WTC11 (cell line): ENCODE measurements at regions of chr5 and their contacts with region 1.

Region 1: GRCh38 chr5:78127875-78128274 is 166.6 kb downstream of the AP3B1 start:
- DNase-seq: peak; percentile 48
- ATAC-seq: peak; percentile 41; the same call in 1 of the 2 replicates
- H3K4me3 Mint-ChIP-seq: no peak overlapping the region
- H3K27ac Mint-ChIP-seq: no peak overlapping the region
- H3K4me1 Mint-ChIP-seq: no peaks in the 10 kb centered on the region
- H3K27me3 Mint-ChIP-seq: no peaks in the 10 kb centered on the region
- CTCF ChIP-seq: peak; percentile 65; the same call in 1 of the 2 replicates

Region 2: DNA sequence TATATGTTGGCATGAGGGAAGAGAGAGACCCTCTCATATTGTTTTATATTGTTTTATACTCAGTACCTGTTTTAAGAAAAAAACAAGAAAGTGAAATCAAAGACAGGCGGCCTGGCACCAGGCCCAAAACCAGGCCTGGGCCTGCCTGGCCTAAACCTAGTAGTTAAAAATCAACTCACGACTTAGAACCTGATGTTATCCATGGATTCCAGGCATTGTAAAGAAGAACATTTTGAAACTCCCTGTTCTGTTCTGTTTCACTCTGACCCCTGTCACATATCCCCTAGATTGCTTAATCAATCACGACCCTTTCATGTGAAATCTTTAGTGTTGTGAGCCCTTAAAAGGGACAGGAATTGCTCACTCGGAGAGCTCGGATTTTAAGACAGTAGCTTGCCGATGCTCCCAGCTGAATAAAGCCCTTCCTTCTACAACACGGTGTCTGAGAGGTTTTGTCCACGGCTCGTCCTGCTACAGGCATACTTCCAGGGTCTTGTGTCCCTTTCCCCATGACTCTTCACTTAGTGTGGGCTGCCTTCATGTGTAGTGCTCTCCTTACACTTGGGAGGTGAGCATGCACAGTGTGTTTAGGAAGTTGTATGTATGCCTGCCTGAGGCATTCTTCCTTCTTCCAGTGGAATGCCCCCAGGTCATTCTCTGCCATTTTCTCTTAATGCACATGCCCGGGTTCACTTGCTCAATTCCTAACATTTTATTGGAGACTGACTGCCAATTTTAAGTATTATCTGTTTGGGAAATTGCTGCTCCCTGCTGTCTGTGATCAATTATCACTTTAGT is 369.5 kb before region 1 on chr5:
- CTCF ChIA-PET with region 1: no interaction called
- POLR2A ChIA-PET with region 1: interaction called, 14 read pairs
- DNase-seq: no peak
- ATAC-seq: no peak
- H3K4me3 Mint-ChIP-seq: no peak overlapping the region
- H3K27ac Mint-ChIP-seq: peak overlapping the region; percentile 39
- H3K4me1 Mint-ChIP-seq: peaks cover 49% of the 10 kb centered on the region
- H3K27me3 Mint-ChIP-seq: no peaks in the 10 kb centered on the region
- CTCF ChIP-seq: no peak

Region 3: DNA sequence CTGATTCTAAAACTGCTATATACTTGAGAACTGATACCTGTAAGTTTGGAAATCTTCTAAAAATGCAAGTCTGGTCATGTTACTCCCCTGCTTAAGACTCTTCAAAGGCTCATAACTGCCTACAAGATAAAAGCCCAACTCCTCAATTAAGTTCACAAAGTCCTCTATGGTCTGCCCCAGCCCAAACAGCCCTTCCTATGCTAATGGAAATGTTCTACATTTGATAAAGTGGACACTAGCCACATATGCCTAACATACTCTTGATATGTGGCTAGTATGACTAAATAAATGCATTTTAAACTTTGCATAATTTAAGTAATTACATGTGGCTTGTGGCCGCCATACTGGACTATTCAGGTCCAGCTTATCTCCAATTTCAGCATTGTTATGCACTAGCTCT is 37.9 kb before region 1 on chr5:
- CTCF ChIA-PET with region 1: interaction called, 13 read pairs
- POLR2A ChIA-PET with region 1: interaction called, 4 read pairs
- DNase-seq: no peak
- ATAC-seq: no peak
- H3K4me3 Mint-ChIP-seq: no peak overlapping the region
- H3K27ac Mint-ChIP-seq: no peak overlapping the region
- H3K4me1 Mint-ChIP-seq: no peaks in the 10 kb centered on the region
- H3K27me3 Mint-ChIP-seq: no peaks in the 10 kb centered on the region
- CTCF ChIP-seq: no peak

Region 4: DNA sequence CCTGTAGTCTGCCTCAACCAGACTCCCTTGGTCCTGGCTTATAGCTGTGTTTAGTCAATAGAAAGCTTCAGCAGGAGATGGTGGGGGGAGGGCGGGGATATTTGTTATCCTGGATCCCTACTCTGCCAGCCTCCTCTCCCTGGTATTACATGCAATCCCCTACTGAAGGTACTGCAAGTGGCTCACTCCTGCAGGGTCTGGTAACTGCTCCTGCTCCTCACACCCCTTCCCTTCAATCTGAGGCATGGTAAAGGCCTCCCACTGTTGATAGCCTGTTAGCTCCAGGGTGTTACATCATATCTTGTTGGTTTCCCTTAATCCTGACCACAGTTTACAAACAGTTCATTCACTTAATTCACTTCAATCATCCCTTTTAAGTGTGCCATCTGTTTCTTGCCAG is 29.1 kb after region 1 on chr5:
- CTCF ChIA-PET with region 1: no interaction called
- POLR2A ChIA-PET with region 1: no interaction called
- DNase-seq: no peak
- ATAC-seq: peak; percentile 68
- H3K4me3 Mint-ChIP-seq: no peak overlapping the region
- H3K27ac Mint-ChIP-seq: no peak overlapping the region
- H3K4me1 Mint-ChIP-seq: no peaks in the 10 kb centered on the region
- H3K27me3 Mint-ChIP-seq: no peaks in the 10 kb centered on the region
- CTCF ChIP-seq: no peak

Region 5: GRCh38 chr5:78359831-78360673 is 232.2 kb after region 1 on chr5 and contains the start of gene SCAMP1:
- CTCF ChIA-PET with region 1: no interaction called
- POLR2A ChIA-PET with region 1: no interaction called
- DNase-seq: peak; percentile 86
- ATAC-seq: peak; percentile 84
- H3K4me3 Mint-ChIP-seq: peak within 1 kb of the TSS; percentile 85
- H3K27ac Mint-ChIP-seq: peak within 1 kb of the TSS; percentile 82
- H3K4me1 Mint-ChIP-seq: peaks cover 29% of the 10 kb centered on the region
- H3K27me3 Mint-ChIP-seq: no peaks in the 10 kb centered on the region
- CTCF ChIP-seq: no peak
- total RNA-seq, gene SCAMP1: 38.3 to 43.8 TPM (median 39.2 TPM) in 3 replicates

Region 6: GRCh38 chr5:78377056-78377717 is 249.3 kb after region 1 on chr5:
- CTCF ChIA-PET with region 1: no interaction called
- POLR2A ChIA-PET with region 1: no interaction called
- DNase-seq: no peak
- ATAC-seq: no peak
- H3K4me3 Mint-ChIP-seq: no peak overlapping the region
- H3K27ac Mint-ChIP-seq: no peak overlapping the region
- H3K4me1 Mint-ChIP-seq: peaks cover 13% of the 10 kb centered on the region; the same call in 1 of the 2 replicates
- H3K27me3 Mint-ChIP-seq: no peaks in the 10 kb centered on the region
- CTCF ChIP-seq: no peak